Left cardiac atrium (tissue), 4 donors: ENCODE measurements at regions of chr6 and their contacts with region 1.

Region 1: GRCh38 chr6:5143634-5144311 is 58.6 kb downstream of the PPP1R3G start:
- DNase-seq: peak; percentile 89
- ATAC-seq: peak; percentile 80 to 85

Region 2: DNA sequence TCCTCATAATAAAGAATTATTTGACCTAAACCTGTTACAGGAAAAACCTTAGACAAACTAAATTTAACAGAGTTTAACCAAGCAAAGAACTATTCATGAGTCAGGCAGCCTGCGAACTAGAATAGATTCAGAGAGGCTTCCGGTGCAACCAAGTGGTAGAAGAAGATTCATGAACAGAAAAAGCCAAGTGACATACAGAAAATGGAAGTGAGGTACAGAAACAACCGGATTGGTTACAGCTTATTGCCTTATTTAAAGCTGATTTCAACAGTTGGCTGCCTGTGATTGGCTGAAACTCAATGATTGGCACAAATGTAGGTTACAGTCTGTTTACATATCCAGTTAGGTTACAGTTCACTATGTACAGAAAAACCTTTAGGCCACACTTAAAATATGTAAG is 48.5 kb before region 1 on chr6:
- intact Hi-C with region 1: no loop called
- DNase-seq: no peak
- ATAC-seq: no peak

Region 3: GRCh38 chr6:5203546-5203945 is 59.8 kb after region 1 on chr6:
- intact Hi-C with region 1: no loop called
- DNase-seq: peak; percentile 26
- ATAC-seq: no peak

Region 4: GRCh38 chr6:5214570-5215052 is 70.8 kb after region 1 on chr6:
- intact Hi-C with region 1: loop called (anchors 2 to 10 kb)
- DNase-seq: peak; percentile 28
- ATAC-seq: peak; percentile 85 to 92

Region 5: GRCh38 chr6:5670811-5671561 is 527.2 kb after region 1 on chr6:
- intact Hi-C with region 1: no loop called
- DNase-seq: no peak
- ATAC-seq: peak; percentile 78 to 80